ENCODE measurements at regions of chr4 and their contacts with region 1.

Region 1: GRCh38 chr4:109702950-109703663 is at the start of gene CASP6:
- DNase-seq: peak; percentile 66
- ATAC-seq: peak; percentile 94
- H3K4me3 ChIP-seq: peak within 1 kb of the TSS; percentile 94
- H3K27ac ChIP-seq: peak within 1 kb of the TSS; percentile 80
- H3K4me1 ChIP-seq: peaks cover 7% of the 10 kb centered on the region
- H3K27me3 ChIP-seq: no peaks in the 10 kb centered on the region
- CTCF ChIP-seq: peak; percentile 61
- POLR2A ChIP-seq: no peak
- RAD21 ChIP-seq: peak; percentile 56
- total RNA-seq, gene CASP6: 44.1 and 45.0 TPM in 2 replicates

Region 2: GRCh38 chr4:109548655-109549054 is 154.5 kb before region 1 on chr4:
- CTCF ChIA-PET with region 1: no interaction called
- POLR2A ChIA-PET with region 1: no interaction called
- dilution Hi-C with region 1: no loop called
- in situ Hi-C with region 1: no loop called
- intact Hi-C with region 1: loop called (anchors 5 kb)
- DNase-seq: peak; percentile 92
- ATAC-seq: peak; percentile 88
- H3K4me3 ChIP-seq: no peak overlapping the region
- H3K27ac ChIP-seq: no peak overlapping the region
- H3K4me1 ChIP-seq: peaks cover 2% of the 10 kb centered on the region; the same call in 1 of the 2 replicates
- H3K27me3 ChIP-seq: no peaks in the 10 kb centered on the region
- CTCF ChIP-seq: no peak
- POLR2A ChIP-seq: no peak
- RAD21 ChIP-seq: no peak

Region 3: GRCh38 chr4:109729718-109730618 is 26.9 kb after region 1 on chr4 and contains the start of gene PLA2G12A:
- CTCF ChIA-PET with region 1: no interaction called
- POLR2A ChIA-PET with region 1: interaction called, 4 read pairs
- dilution Hi-C with region 1: no loop called
- in situ Hi-C with region 1: no loop called
- intact Hi-C with region 1: loop called (anchors 2 kb)
- DNase-seq: peak; percentile 56
- ATAC-seq: peak; percentile 96
- H3K4me3 ChIP-seq: peak within 1 kb of the TSS; percentile 93
- H3K27ac ChIP-seq: peak within 1 kb of the TSS; percentile 42
- H3K4me1 ChIP-seq: peaks cover 5% of the 10 kb centered on the region; the same call in 1 of the 2 replicates
- H3K27me3 ChIP-seq: no peaks in the 10 kb centered on the region
- CTCF ChIP-seq: no peak
- POLR2A ChIP-seq: no peak
- RAD21 ChIP-seq: no peak
- total RNA-seq, gene PLA2G12A: 8.9 and 17.4 TPM in 2 replicates

Region 4: GRCh38 chr4:109752525-109752924 is 49.4 kb after region 1 on chr4:
- CTCF ChIA-PET with region 1: no interaction called
- POLR2A ChIA-PET with region 1: no interaction called
- dilution Hi-C with region 1: no loop called
- in situ Hi-C with region 1: no loop called
- intact Hi-C with region 1: no loop called
- DNase-seq: no peak
- ATAC-seq: no peak
- H3K4me3 ChIP-seq: no peak overlapping the region
- H3K27ac ChIP-seq: no peak overlapping the region
- H3K4me1 ChIP-seq: no peaks in the 10 kb centered on the region
- H3K27me3 ChIP-seq: no peaks in the 10 kb centered on the region
- CTCF ChIP-seq: no peak
- POLR2A ChIP-seq: no peak
- RAD21 ChIP-seq: no peak

Region 5: DNA sequence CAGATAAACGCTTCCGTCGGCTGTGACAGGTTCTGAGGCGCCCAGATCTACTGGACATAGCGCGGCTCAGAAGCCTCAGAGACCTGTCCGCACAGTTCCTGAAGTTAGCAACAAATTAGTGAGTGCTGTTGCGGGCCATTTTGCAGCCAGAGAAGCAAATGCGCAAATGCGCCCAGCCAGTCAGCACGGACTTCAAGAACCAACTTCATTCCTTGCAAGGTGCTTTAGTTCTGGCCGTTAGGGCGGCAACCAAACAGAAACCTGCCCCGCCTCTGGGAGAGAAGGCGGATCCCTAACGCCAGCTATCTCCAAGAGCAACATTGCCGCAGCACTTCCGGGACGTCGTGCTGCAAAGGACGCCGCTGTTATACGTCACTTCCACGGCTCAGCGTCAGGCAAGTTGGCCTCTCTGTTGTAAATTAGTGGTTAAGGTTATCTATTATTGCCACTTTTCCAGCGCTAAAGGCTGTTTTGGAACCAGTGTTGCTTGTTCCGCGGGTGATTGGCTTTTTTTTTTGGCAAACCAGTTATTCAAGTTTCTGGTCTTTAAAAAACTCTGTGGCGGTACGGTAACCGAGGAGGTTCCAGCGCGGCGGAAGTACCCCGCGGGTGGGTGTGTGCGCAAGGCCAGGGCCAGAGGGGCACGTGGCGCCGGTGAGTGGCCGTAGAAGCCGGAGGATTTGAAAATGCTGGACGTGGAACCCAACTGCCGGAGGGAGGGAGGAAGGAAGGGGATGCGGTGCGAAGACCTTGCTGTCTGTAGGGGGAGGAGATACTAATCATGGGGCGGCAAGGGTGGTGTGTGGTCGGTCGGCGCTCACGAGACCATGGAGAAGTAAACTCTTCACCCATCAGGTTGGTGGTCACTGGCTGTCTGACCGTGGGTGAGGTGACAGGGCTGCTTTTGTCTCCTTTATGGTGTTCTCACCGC is 112.3 kb after region 1 on chr4 and contains the start of gene GAR1:
- CTCF ChIA-PET with region 1: interaction called, 5 read pairs
- POLR2A ChIA-PET with region 1: no interaction called
- dilution Hi-C with region 1: no loop called
- in situ Hi-C with region 1: loop called (anchors 10 kb)
- intact Hi-C with region 1: loop called (anchors 1 kb)
- DNase-seq: peak; percentile 92
- ATAC-seq: peak; percentile 95
- H3K4me3 ChIP-seq: peak within 1 kb of the TSS; percentile 61
- H3K27ac ChIP-seq: peak within 1 kb of the TSS; percentile 78
- H3K4me1 ChIP-seq: no peaks in the 10 kb centered on the region
- H3K27me3 ChIP-seq: no peaks in the 10 kb centered on the region
- CTCF ChIP-seq: no peak
- POLR2A ChIP-seq: 0 out of 2 replicates have a peak, but pooled peaks have one; percentile 32
- RAD21 ChIP-seq: no peak
- total RNA-seq, gene GAR1: 1.1 and 4.4 TPM in 2 replicates

Region 6: GRCh38 chr4:109977854-109978501 is 274.9 kb after region 1 on chr4:
- CTCF ChIA-PET with region 1: no interaction called
- POLR2A ChIA-PET with region 1: no interaction called
- dilution Hi-C with region 1: no loop called
- in situ Hi-C with region 1: no loop called
- intact Hi-C with region 1: loop called (anchors 1 kb)
- DNase-seq: peak; percentile 60
- ATAC-seq: peak; percentile 56
- H3K4me3 ChIP-seq: no peak overlapping the region
- H3K27ac ChIP-seq: no peak overlapping the region
- H3K4me1 ChIP-seq: peaks cover 6% of the 10 kb centered on the region; the same call in 1 of the 2 replicates
- H3K27me3 ChIP-seq: no peaks in the 10 kb centered on the region
- CTCF ChIP-seq: peak; percentile 74
- POLR2A ChIP-seq: no peak
- RAD21 ChIP-seq: peak; percentile 69